Heart right ventricle (tissue), 16 donors: ENCODE measurements at regions of chr19 and their contacts with region 1.

Region 1: GRCh38 chr19:6238643-6239281 is 41.0 kb downstream of the MLLT1 start:
- DNase-seq: peak; percentile 53 to 67
- ATAC-seq: peak; percentile 8 to 53 (median 26)
- H3K4me3 ChIP-seq: peak overlapping the region in 3 of 10 donors; percentile 15 to 33 (median 17)
- H3K27ac ChIP-seq: peak overlapping the region in 9 of 10 donors; percentile 57 to 84 (median 77)
- H3K4me1 ChIP-seq: peaks cover 44 to 100% (median 88%) of the 10 kb centered on the region in 9 donors
- H3K27me3 ChIP-seq: no peaks in the 10 kb centered on the region
- CTCF ChIP-seq: peak in 2 of 9 donors; percentile 4 to 11

Region 2: GRCh38 chr19:6212403-6213265 is 26.1 kb before region 1 on chr19:
- intact Hi-C with region 1: no loop called
- DNase-seq: no peak
- ATAC-seq: peak in 1 of 8 donors; percentile 18
- H3K4me3 ChIP-seq: no peak overlapping the region
- H3K27ac ChIP-seq: no peak overlapping the region
- H3K4me1 ChIP-seq: peaks cover 0 to 13% (median 7%) of the 10 kb centered on the region in 9 donors
- H3K27me3 ChIP-seq: no peaks in the 10 kb centered on the region
- CTCF ChIP-seq: no peak

Region 3: DNA sequence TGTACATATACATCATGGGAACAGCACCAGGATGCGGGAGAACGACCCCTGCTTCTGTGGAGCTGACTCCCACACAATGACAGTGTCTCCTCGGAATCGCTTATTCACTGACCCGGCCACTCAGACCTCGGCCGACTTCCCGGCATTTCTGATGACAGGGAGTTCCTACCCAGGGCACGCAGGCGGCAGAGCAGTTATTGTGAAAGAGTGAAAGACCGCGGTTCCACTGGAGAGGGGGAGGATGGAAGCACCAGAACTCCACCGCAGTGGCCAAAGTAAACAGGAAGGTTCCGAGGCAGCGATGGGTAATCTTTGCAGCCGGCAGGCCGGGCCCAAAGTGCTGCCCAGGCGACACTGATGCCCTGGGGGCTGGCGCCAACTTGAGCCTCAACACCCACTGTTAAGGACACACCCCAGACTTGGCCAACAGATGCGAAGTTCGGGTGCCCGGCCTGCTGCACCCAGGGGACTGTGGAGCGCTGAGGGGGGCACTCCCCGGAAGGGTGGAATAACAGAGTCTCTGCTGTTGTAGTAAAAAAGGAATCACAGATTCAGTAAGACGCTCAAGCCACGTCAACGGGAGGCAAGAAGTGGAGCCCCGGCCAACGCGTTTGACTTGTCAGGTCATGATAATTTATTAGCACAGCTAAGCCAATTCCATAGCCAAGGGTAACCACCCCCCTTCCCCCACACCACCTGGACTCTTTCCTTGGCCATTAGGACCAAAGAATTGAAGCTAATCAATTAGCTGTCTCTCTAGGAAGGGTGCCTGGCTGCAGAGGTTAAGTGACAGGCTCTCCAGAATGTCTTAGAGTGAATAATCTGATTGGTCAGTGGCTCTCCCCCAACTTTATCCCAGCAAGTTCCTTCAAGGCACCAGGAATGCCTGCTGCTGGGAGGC is 35.2 kb after region 1 on chr19:
- intact Hi-C with region 1: loop called in 7 of 10 experiments (anchors 5 kb)
- DNase-seq: peak; percentile 78 to 80
- ATAC-seq: peak; percentile 54 to 80 (median 75)
- H3K4me3 ChIP-seq: peak overlapping the region in 6 of 10 donors; percentile 30 to 43 (median 34)
- H3K27ac ChIP-seq: peak overlapping the region; percentile 72 to 95 (median 88)
- H3K4me1 ChIP-seq: peaks cover 42 to 89% (median 87%) of the 10 kb centered on the region in 9 donors
- H3K27me3 ChIP-seq: no peaks in the 10 kb centered on the region
- CTCF ChIP-seq: no peak